ENCODE measurements at regions of chr4 and their contacts with region 1.

Region 1: GRCh38 chr4:117134386-117134785 is 49.0 kb upstream of the TRAM1L1 start:
- DNase-seq: peak; percentile 20
- ATAC-seq: peak; percentile 70
- H3K4me3 ChIP-seq: no peak overlapping the region
- H3K27ac ChIP-seq: no peak overlapping the region
- H3K4me1 ChIP-seq: no peaks in the 10 kb centered on the region
- H3K27me3 ChIP-seq: no peaks in the 10 kb centered on the region
- CTCF ChIP-seq: peak; percentile 62
- EP300 ChIP-seq: no peak
- POLR2A ChIP-seq: no peak
- RAD21 ChIP-seq: no peak

Region 2: DNA sequence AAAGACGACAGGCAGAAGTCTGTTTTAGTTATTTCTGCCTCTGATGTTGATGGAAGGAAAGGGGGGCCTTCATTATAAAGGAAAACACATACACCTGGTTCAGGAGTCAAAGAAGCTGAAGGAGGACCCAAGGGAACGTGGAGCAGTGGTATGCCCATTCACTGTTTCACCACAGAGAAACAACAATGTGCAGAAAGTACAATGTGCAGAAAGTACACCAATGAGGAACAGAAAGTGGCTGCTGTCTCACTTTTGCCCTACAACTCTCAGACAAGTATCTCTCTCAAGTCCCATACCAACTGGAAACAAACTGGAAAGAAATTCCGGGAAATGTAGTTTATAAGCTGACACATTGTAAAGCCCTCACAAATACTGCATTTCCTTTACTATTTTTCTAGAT is 613.5 kb before region 1 on chr4:
- CTCF ChIA-PET with region 1: no interaction called
- POLR2A ChIA-PET with region 1: no interaction called
- in situ Hi-C with region 1: no loop called
- intact Hi-C with region 1: no loop called
- DNase-seq: no peak
- ATAC-seq: no peak
- H3K4me3 ChIP-seq: no peak overlapping the region
- H3K27ac ChIP-seq: no peak overlapping the region
- H3K4me1 ChIP-seq: no peaks in the 10 kb centered on the region
- H3K27me3 ChIP-seq: no peaks in the 10 kb centered on the region
- CTCF ChIP-seq: no peak
- EP300 ChIP-seq: no peak
- POLR2A ChIP-seq: no peak
- RAD21 ChIP-seq: no peak

Region 3: DNA sequence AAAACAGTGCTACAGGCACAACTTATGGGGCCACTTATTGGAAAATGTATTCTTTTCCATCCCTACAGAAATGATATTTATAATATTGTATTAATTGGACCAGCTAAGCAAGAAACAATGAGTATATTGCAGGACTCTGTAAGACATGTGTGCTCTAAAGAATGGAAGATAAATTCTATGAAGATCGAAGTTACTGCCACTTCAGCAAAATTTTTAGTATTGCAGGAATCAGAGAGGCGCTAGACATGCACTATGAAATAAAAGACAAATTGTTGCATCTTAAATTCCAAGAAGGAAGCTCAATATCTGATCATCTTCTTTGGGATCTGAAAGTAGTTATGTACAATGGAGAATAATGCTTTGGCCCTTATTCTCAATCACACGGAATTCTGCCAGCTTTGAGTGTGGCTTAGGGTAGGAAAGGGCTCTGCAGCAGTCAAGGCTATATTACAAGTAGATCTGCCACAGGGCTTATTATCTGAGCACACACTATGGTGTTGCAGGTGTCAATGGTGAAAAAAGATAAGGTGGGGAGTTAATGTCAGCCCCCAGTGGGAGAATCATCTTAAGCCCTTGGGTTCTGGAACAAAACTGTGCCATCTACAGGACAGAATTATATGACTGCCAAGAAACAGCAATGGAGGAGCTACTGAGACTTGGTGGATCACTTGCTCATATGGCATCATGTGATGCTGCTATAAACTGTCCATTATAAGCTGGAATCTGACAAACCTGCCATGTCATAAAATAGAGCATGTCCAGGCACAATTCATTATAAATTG is 565.9 kb after region 1 on chr4:
- CTCF ChIA-PET with region 1: no interaction called
- POLR2A ChIA-PET with region 1: no interaction called
- in situ Hi-C with region 1: no loop called
- intact Hi-C with region 1: loop called (anchors 5 kb)
- DNase-seq: peak; percentile 5
- ATAC-seq: peak; percentile 64
- H3K4me3 ChIP-seq: no peak overlapping the region
- H3K27ac ChIP-seq: no peak overlapping the region
- H3K4me1 ChIP-seq: no peaks in the 10 kb centered on the region
- H3K27me3 ChIP-seq: no peaks in the 10 kb centered on the region
- CTCF ChIP-seq: peak; percentile 38
- EP300 ChIP-seq: no peak
- POLR2A ChIP-seq: no peak
- RAD21 ChIP-seq: no peak

Measured in HepG2 (cell line).